Transverse colon (tissue), 4 donors: ENCODE measurements at regions of chr11 and their contacts with region 1.

Region 1: DNA sequence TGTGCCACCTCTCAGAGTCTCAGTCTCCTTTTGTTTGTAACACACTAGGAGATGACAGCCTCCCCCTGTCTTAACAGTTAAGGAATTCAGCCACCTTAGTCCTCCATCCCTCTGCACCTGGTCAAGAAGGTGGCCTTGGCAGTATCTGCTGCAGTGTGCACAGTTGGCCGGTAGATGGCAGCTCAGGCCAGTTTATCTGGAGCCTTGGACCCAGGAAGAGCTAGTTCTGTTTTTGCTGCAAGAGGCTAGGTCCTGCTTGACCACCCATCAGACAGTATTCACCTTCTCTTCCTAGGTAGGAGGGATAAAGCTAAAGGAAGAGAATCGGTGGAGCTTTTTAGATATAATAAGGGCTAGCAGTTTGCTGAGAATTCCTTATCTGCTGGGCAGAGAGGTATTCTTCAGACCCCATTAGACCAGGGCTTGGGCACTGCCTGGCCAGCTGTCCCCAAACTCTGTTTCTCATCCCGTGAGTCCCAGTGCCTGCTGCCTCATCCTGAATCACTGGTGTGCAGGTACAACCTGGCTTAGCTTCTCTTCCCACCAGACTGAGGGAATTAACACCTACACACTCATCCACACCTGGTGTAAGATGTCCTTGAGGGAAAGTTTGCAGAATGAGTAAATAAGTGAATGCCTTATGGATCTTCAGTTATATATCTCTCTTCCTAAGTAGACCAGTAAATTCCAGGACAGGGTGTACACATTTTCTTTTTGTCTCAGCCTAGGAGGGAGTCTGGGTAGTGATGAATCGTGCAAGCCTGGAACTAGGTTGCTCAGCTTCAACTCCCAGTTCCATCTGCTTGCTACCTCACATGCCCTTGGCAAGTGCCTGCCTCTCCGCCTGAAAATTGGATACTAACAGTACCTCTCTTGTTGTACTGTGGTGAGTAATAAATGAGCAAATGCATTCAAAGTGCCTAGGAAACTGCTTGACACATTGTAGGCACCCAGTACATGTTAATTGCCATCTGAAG is 70.8 kb upstream of the NARS2 start:
- DNase-seq: peak; percentile 71
- H3K4me3 ChIP-seq: no peak overlapping the region
- H3K27ac ChIP-seq: no peak overlapping the region
- H3K4me1 ChIP-seq: no peaks in the 10 kb centered on the region
- H3K27me3 ChIP-seq: no peaks in the 10 kb centered on the region
- CTCF ChIP-seq: peak; percentile 80 to 94 (median 92)
- EP300 ChIP-seq: no peak
- POLR2A ChIP-seq: no peak

Region 2: DNA sequence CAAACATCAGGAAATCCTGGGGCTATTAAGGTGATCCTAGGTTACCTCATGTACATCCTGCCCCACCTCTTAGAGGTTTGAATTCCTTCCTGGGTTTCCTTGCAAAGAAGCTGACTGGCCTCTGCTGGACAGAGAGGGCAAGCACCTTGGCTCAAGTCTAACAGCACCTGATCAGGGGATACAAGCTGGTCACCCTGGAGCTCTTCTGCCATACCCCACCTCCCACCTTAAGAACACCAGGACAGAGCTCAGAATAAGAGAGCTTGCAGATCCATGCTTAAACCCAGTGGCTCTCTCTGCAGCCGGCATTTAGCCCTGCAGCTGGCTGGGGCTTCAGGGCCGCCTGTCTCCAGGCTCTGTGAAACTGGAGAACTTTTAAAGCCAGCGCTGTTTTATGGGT is 315.7 kb after region 1 on chr11:
- in situ Hi-C with region 1: loop called in 2 of 4 experiments (anchors 10 kb)
- intact Hi-C with region 1: no loop called
- DNase-seq: peak; percentile 31
- H3K4me3 ChIP-seq: no peak overlapping the region
- H3K27ac ChIP-seq: no peak overlapping the region
- H3K4me1 ChIP-seq: peaks cover 0 to 7% (median 2%) of the 10 kb centered on the region in 4 donors
- H3K27me3 ChIP-seq: peaks cover 28% of the 10 kb centered on the region
- CTCF ChIP-seq: peak; percentile 27 to 68 (median 50)
- EP300 ChIP-seq: no peak
- POLR2A ChIP-seq: no peak

Region 3: DNA sequence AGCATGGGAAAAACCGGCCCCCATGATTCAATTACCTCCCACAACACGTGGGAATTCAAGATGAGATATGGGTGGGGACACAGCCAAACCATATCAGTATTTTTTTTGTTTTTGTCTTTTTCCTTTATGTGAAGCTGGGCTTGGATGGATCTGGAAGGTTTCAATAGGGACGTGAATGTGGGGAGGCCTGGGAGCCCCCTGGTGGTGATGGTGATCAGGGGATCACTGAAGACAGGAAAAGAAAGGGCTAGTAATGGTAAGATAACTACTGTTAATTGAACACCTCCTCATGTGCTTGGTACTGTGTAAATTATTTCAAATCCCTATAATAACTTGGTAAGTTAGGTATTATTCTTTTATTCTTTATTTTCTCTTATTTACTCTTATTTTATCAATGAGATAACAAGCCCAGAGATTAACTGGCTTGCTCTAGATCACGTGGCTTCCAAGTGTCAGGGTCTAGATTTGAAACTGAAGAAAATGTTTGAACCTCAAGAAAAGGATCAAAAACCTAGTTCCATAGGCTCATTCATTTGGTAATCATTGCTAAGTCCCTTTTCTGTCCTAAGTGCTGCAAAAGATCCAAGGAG is 431.1 kb after region 1 on chr11:
- in situ Hi-C with region 1: loop called (anchors 25 kb)
- intact Hi-C with region 1: loop called (anchors 5 kb)
- DNase-seq: peak; percentile 47
- H3K4me3 ChIP-seq: no peak overlapping the region
- H3K27ac ChIP-seq: no peak overlapping the region
- H3K4me1 ChIP-seq: peaks cover 0 to 6% (median 2%) of the 10 kb centered on the region in 4 donors
- H3K27me3 ChIP-seq: no peaks in the 10 kb centered on the region
- CTCF ChIP-seq: peak; percentile 53 to 64 (median 61)
- EP300 ChIP-seq: no peak
- POLR2A ChIP-seq: no peak

Region 4: DNA sequence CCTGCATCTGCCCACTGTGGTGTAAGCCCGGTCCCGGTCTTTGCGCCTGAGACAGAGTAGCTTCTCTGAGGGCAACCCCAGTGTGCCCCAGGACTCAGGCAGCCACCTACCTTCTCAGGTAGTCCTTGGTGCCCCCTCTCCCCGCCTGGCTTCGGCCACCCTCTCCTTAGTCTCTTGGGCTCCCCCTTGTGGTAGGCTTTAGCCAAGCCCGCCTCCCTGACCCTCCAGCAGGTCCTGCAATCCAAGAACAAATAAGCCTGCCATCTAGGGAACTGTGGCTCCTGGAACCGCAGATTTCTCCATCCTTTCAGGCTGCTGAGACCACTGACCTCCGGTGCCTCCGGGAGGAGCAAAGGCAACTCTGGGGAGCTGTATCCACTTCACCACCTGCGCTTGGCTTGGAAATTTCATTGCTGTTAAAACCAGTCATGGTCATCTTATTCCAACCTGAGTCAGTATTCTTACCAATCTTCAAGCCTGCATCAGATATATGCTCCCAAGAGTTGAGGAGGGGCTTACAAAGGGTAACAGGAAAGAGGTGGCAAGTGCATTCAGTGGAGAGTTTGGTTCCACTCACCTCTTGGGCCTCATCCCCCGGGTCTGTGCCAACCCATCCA is 848.1 kb after region 1 on chr11:
- in situ Hi-C with region 1: no loop called
- intact Hi-C with region 1: loop called (anchors 5 kb)
- DNase-seq: peak; percentile 70
- H3K4me3 ChIP-seq: no peak overlapping the region
- H3K27ac ChIP-seq: no peak overlapping the region
- H3K4me1 ChIP-seq: no peaks in the 10 kb centered on the region
- H3K27me3 ChIP-seq: no peaks in the 10 kb centered on the region
- CTCF ChIP-seq: peak; percentile 68 to 87 (median 74)
- EP300 ChIP-seq: no peak
- POLR2A ChIP-seq: no peak